ENCODE measurements at regions of chr2 and their contacts with region 1.

Region 1: DNA sequence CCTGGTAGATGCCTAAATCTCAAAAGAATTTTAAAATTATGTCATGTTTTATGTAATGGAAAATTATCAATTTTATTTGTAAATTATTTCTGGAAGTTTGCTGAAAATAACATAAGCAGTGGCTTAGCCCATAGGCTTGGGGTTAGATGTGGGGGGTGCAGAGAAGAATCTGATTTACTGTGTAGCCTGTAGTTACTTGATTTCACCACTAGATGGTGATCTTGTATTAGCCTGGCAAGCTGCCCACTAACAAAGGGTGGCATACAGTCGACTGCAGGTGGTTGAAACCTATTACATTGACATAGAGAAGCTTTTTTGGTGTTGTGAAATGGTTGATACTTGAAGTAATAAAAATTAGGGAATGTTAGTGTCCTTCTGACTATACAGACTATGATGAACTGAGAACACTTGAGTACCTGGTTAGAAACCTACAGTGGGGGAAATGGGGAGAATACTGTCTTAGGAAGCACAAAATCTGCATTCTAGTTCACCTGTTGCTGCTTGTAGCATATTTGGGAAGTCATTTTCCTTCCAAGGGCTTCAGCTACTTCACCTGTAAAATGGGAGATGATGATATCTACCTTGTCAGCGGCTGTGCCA is 191.0 kb upstream of the LHCGR start:
- DNase-seq: peak; percentile 56
- H3K4me3 ChIP-seq: no peak overlapping the region
- H3K27ac ChIP-seq: no peak overlapping the region
- H3K4me1 ChIP-seq: no peaks in the 10 kb centered on the region
- H3K27me3 ChIP-seq: no peaks in the 10 kb centered on the region
- CTCF ChIP-seq: peak; percentile 58 to 64
- POLR2A ChIP-seq: no peak

Region 2: DNA sequence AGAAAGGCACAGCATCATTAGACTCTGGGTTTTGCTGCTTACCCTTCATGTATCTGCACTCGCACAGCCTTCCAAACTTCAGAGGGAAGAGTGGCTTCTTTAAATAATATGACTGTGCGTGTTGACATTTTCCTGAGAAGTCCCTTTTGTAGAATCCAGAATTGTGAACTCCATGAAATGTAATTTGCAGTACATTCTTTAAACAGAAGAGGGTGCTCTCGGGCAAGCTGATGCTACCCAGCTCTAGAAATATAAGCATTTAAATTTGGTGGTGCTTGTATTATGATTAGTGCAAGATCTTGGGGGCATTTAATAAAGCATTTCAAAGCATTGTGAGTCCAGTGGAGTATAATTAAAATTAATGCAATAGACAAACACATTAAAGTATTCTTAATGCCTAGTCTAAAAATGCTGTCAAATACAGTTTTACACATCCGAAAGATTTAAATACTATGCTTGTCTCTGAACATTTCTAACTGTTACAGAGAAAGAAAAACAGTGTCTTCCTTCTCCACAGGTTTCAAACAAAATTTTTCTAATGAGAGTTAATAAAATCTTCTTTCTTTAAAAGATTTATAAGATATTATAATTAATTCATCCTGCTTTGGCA is 346.2 kb before region 1 on chr2:
- CTCF ChIA-PET with region 1: no interaction called
- POLR2A ChIA-PET with region 1: no interaction called
- dilution Hi-C with region 1: no loop called
- intact Hi-C with region 1: loop called (anchors 1 kb)
- DNase-seq: peak; percentile 78
- H3K4me3 ChIP-seq: no peak overlapping the region
- H3K27ac ChIP-seq: no peak overlapping the region
- H3K4me1 ChIP-seq: no peaks in the 10 kb centered on the region
- H3K27me3 ChIP-seq: no peaks in the 10 kb centered on the region
- CTCF ChIP-seq: peak; percentile 43 to 61
- POLR2A ChIP-seq: no peak

Region 3: GRCh38 chr2:48768669-48769068 is 177.9 kb before region 1 on chr2:
- CTCF ChIA-PET with region 1: no interaction called
- POLR2A ChIA-PET with region 1: no interaction called
- dilution Hi-C with region 1: no loop called
- intact Hi-C with region 1: no loop called
- DNase-seq: no peak
- H3K4me3 ChIP-seq: no peak overlapping the region
- H3K27ac ChIP-seq: no peak overlapping the region
- H3K4me1 ChIP-seq: no peaks in the 10 kb centered on the region
- H3K27me3 ChIP-seq: no peaks in the 10 kb centered on the region
- CTCF ChIP-seq: no peak
- POLR2A ChIP-seq: no peak

Region 4: GRCh38 chr2:48844417-48845155 is 102.0 kb before region 1 on chr2:
- CTCF ChIA-PET with region 1: no interaction called
- POLR2A ChIA-PET with region 1: no interaction called
- dilution Hi-C with region 1: no loop called
- intact Hi-C with region 1: no loop called
- DNase-seq: no peak
- H3K4me3 ChIP-seq: no peak overlapping the region
- H3K27ac ChIP-seq: no peak overlapping the region
- H3K4me1 ChIP-seq: no peaks in the 10 kb centered on the region
- H3K27me3 ChIP-seq: no peaks in the 10 kb centered on the region
- CTCF ChIP-seq: no peak
- POLR2A ChIP-seq: no peak

Measured in endothelial cell of umbilical vein (primary cell).